ENCODE measurements at regions of chr10 and their contacts with region 1.

Region 1: DNA sequence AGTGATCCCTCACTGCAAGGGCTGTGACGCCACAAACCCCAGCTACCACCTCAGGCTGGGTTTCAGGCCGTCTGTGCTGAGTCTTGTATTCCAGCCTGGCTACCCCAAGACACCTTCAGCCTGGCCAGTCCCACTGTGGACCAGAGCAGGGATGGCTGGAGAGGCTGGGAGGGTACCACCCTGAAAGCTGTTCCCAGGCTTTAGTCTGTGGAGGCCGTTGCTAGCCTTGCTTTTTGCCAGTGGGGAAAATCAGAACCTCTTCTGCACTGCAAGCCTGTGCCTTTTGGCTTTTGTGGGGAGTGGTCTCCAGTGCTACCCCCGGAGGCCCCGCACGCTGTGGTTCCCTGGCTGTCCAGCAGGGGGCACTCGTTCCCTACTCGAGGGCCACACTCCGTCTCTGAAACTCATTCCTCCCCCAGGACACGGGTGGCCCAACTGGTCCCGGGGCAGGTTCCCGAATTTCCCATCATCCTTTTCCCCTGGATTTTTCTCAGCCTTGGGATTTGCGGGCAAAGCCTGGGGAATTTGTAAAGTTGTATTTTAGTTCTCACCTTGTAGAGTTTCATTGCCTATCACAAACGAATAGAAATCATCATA is 128.4 kb upstream of the BTBD16 start:
- DNase-seq: no peak
- H3K4me3 ChIP-seq: no peak overlapping the region
- H3K27ac ChIP-seq: peak overlapping the region; percentile 93 to 95
- H3K4me1 ChIP-seq: peaks cover 28 to 41% of the 10 kb centered on the region in 2 donors
- H3K27me3 ChIP-seq: no peaks in the 10 kb centered on the region
- CTCF ChIP-seq: peak; percentile 82 to 98 (median 89)

Region 2: DNA sequence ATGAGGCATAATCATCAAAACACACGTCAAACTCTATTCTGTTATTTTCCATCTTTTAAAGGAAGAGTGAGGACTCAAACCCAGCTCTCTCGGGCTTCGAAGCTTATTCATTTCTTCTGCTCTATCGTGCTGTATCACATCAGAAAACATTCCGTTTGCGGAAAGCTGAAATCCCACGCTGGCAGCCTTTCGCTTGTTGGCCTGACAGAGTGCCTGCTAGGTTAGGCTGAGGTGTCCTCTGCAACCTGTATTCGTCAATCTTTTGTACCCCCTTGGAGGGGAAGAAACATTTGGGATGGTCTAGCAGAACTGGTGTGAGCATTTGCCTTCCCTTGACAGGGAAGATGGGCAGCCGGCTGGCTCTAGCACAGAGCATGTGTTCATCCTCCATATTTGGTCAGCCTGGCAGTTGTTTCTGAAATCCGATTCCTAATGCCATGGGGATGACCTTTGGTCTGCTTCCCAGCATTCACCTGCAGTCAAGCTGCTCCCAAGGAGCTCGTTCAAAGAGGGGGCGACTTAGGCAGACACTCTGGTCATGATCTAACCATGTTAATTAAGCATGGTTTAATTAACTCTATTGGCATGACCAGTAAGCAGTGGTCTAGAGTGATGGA is 98.6 kb before region 1 on chr10:
- intact Hi-C with region 1: no loop called
- DNase-seq: peak in 1 of 2 donors; percentile 81
- H3K4me3 ChIP-seq: peak overlapping the region in 1 of 2 donors; percentile 38
- H3K27ac ChIP-seq: peak overlapping the region; percentile 58 to 72
- H3K4me1 ChIP-seq: peaks cover 0 to 20% of the 10 kb centered on the region in 2 donors
- H3K27me3 ChIP-seq: no peaks in the 10 kb centered on the region
- CTCF ChIP-seq: no peak

Region 3: GRCh38 chr10:122128357-122128756 is 14.4 kb before region 1 on chr10:
- intact Hi-C with region 1: loop called (anchors 1 kb)
- DNase-seq: peak in 1 of 2 donors; percentile 80
- H3K4me3 ChIP-seq: peak overlapping the region; percentile 44 to 53
- H3K27ac ChIP-seq: peak overlapping the region; percentile 82 to 88
- H3K4me1 ChIP-seq: peaks cover 0 to 34% of the 10 kb centered on the region in 2 donors
- H3K27me3 ChIP-seq: no peaks in the 10 kb centered on the region
- CTCF ChIP-seq: no peak

Region 4: GRCh38 chr10:122286867-122287266 is 144.1 kb after region 1 on chr10:
- intact Hi-C with region 1: loop called (anchors 5 kb)
- DNase-seq: peak; percentile 74 to 89
- H3K4me3 ChIP-seq: no peak overlapping the region
- H3K27ac ChIP-seq: peak overlapping the region; percentile 67 to 73
- H3K4me1 ChIP-seq: peaks cover 6 to 15% of the 10 kb centered on the region in 2 donors
- H3K27me3 ChIP-seq: no peaks in the 10 kb centered on the region
- CTCF ChIP-seq: no peak

Region 5: GRCh38 chr10:122461367-122461728 is 318.6 kb after region 1 on chr10 and contains the start of gene HTRA1:
- intact Hi-C with region 1: loop called (anchors 10 kb)
- DNase-seq: peak in 1 of 2 donors; percentile 88
- H3K4me3 ChIP-seq: peak within 1 kb of the TSS; percentile 94 to 96
- H3K27ac ChIP-seq: peak within 1 kb of the TSS; percentile 87 to 93
- H3K4me1 ChIP-seq: peaks cover 6 to 27% of the 10 kb centered on the region in 2 donors
- H3K27me3 ChIP-seq: no peaks in the 10 kb centered on the region
- CTCF ChIP-seq: no peak
- total RNA-seq, gene HTRA1: 112 TPM

Measured in ascending aorta (tissue), 2 donors.